Common myeloid progenitor, CD34-positive (primary cell): ENCODE measurements at regions of chr6 and their contacts with region 1.

Region 1: DNA sequence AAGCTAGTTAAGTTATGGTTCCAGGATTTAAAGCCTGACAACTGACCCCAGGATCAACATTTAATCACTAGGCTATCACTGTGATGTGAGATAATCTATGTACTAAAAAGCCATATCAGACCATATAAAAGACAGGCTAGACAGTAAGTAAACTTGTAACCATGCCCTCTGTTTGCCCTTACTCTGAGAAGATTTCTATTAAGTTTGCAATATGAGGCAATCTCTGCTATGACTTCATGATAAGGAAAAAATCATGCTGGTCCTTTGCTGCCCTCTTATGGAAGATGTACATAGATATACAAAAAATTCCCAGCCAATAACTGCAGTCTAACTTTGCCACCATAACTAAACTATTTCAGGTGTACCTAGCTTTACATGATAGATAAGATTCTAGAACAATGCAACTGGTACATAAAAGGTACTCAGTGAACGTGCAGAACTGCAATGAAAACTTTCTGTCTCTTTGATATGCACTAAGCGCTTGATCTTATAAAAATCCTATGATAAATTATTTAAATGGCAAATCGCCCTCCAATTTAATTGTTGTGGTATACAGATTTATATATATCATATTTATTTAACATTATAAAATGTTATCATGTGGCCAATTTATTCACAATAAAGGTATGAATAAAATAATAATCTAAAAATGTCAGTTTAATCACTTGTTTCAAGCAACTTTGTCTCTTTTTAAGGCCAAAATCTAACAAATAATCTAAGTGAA is 70.5 kb downstream of the FAM217A start:
- DNase-seq: peak; percentile 68 to 84 (median 84)
- H3K4me3 ChIP-seq: no peak overlapping the region
- H3K27ac ChIP-seq: no peak overlapping the region
- H3K4me1 ChIP-seq: peaks cover 0 to 11% (median 8%) of the 10 kb centered on the region in 4 experiments
- H3K27me3 ChIP-seq: no peaks in the 10 kb centered on the region

Region 2: GRCh38 chr6:3919130-3919628 is 89.3 kb before region 1 on chr6:
- CTCF ChIA-PET with region 1: no interaction called
- POLR2A ChIA-PET with region 1: no interaction called
- DNase-seq: no peak
- H3K4me3 ChIP-seq: no peak overlapping the region
- H3K27ac ChIP-seq: no peak overlapping the region
- H3K4me1 ChIP-seq: no peaks in the 10 kb centered on the region
- H3K27me3 ChIP-seq: no peaks in the 10 kb centered on the region

Region 3: DNA sequence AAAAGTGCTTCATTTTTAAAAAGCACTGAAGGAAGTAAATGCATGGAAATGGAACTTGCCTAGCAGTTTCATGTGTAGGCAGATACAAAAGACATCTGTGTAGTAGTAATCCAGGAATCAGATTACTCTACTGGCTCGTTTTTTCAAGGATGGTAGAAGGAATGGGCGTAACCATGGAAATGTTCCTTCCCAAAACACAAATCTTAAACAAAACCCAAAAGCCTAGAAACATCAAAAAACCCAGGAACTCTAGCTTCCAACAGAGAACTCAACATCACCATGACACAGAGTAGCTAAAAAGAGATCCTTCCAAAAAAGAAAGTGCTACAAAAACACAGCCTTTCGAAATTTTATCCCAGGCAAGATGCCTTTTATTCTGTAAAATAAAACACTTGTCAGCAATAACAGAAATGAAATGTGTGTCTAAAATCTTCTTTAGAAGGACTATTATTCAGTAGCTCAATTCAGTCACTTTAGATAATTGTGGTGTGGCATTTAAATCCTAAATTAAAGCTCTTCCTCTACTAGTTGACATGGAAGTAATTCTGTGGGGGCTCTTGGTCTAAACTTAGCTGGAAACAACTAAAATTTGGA is 11.2 kb before region 1 on chr6:
- CTCF ChIA-PET with region 1: interaction called, 20 read pairs
- POLR2A ChIA-PET with region 1: no interaction called
- DNase-seq: no peak
- H3K4me3 ChIP-seq: no peak overlapping the region
- H3K27ac ChIP-seq: no peak overlapping the region
- H3K4me1 ChIP-seq: peaks cover 0 to 2% (median 0%) of the 10 kb centered on the region in 4 experiments
- H3K27me3 ChIP-seq: no peaks in the 10 kb centered on the region